PC-9 (cell line): ENCODE measurements at regions of chr15 and their contacts with region 1.

Region 1: DNA sequence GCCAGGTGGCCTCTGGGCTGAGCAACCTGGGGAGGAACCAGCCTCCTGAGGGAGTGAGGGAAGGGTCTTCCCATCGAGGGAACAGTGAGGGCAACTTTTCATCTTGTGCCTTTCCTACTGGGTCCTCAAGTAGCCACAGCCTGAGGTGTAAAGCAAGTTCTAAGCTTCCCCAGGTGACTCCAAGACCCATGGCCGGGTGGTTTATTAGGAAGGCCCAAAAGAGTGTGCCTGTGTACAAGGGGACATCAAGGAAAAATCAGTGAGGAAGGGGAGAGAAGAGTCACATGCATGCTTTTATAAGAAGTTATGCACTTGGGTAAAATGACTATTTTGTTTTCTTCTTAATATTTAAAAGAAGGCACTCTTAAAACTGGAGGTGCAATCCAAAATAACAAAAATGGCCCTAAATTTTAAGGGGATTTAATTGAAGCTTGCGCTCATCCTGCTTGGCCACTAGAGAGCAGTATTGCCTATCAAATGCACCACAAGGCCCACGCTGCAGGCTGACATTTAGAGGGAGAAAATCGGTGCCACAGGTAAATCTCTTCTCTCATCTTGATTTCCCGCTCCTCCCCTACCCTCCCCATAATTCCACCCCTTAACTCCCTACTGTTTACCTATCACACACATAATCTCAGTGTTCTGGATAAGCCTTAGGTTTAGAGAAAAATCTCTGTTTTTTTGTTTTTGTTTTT is 6.7 kb downstream of the NANOGP8 start:
- DNase-seq: peak in 1 of 2 experiments; percentile 29
- H3K4me3 ChIP-seq: no peak overlapping the region
- H3K27ac ChIP-seq: no peak overlapping the region
- H3K4me1 ChIP-seq: no peaks in the 10 kb centered on the region
- H3K27me3 ChIP-seq: no peaks in the 10 kb centered on the region
- CTCF ChIP-seq: peak; percentile 86

Region 2: DNA sequence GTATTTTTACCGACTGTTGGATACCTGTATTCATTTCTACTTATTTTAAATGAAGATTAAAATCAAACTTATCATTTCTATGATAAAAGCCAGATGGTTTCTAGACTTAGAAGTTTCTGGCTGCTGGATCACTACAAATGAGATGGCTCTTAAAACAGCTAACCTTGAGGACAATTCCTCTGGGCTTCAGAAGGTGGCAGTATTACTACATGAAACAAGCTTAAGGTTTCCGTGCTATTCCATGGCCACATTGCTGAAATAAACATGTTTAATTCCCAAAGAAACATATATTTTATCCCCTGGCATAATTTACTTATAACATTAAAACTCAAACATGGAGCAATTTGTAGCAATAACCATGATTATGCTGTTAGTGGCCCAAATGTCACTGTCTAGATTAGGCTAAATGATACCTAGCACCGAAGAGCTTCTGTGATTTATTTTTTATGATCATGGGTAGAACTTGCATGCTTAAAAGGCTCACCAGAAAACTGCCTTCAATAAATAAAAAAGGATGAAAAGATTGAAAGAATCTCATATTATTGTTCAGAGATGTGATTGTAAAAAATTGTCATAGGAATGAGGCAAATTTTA is 210.8 kb after region 1 on chr15:
- CTCF ChIA-PET with region 1: no interaction called
- POLR2A ChIA-PET with region 1: no interaction called
- intact Hi-C with region 1: loop called (anchors 10 kb)
- DNase-seq: peak in 1 of 2 experiments; percentile 43
- H3K4me3 ChIP-seq: no peak overlapping the region
- H3K27ac ChIP-seq: no peak overlapping the region
- H3K4me1 ChIP-seq: peaks cover 17% of the 10 kb centered on the region; the same call in 1 of the 2 replicates
- H3K27me3 ChIP-seq: no peaks in the 10 kb centered on the region
- CTCF ChIP-seq: peak; percentile 75